Mammary epithelial cell (primary cell): ENCODE measurements at regions of chr18 and their contacts with region 1.

Region 1: DNA sequence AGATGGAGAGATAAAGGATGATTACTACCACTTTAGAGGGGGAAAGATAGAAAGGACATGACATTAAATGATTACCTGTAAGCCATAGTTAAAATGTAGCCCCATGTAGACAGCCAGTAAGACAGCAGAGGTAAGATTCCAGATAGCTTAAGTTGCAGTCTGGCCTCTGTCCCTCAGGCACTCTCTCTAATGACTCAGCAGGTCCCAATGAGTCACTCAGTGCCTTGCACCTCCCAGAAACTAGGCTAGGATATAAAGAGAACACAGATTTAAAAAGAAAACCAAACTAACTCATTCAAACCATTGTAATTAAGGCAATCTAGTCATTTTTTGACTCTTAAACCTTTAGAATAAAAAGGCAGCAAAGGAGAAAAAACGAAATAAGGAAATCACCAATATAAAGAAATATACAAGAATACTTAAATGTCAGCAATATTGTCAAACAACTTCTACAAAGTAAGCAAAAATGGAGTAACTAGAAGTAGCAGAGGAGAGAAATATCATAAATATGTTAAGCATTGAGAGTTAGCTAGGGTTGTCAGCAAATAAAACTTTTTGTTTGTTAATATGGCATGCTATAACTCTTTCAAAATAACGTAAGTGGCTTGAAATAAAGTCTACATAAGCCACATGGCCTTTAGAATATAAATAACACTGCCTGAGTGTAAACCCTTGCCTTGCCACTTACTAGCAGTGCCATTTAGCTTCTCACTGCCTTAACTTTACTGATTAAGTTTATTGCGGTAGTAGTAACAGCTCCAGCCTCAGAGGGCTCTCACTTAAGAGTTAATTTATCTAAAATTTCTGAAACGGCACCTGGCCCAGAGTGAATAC is 48.5 kb downstream of the SOCS6 start:
- DNase-seq: peak; percentile 96
- H3K4me3 ChIP-seq: no peak overlapping the region
- H3K27ac ChIP-seq: peak overlapping the region; percentile 99
- H3K4me1 ChIP-seq: peaks cover 37% of the 10 kb centered on the region
- H3K27me3 ChIP-seq: no peaks in the 10 kb centered on the region
- CTCF ChIP-seq: no peak

Region 2: GRCh38 chr18:70044632-70045031 is 292.7 kb before region 1 on chr18:
- CTCF ChIA-PET with region 1: no interaction called
- dilution Hi-C with region 1: no loop called
- in situ Hi-C with region 1: no loop called
- intact Hi-C with region 1: loop called (anchors 5 kb)
- DNase-seq: peak; percentile 98
- H3K4me3 ChIP-seq: peak overlapping the region; percentile 6 to 100 (median 83)
- H3K27ac ChIP-seq: peak overlapping the region; percentile 97
- H3K4me1 ChIP-seq: peaks cover 24% of the 10 kb centered on the region
- H3K27me3 ChIP-seq: no peaks in the 10 kb centered on the region
- CTCF ChIP-seq: no peak

Region 3: GRCh38 chr18:70205421-70206397 is 131.6 kb before region 1 on chr18 and contains the start of gene RTTN:
- CTCF ChIA-PET with region 1: no interaction called
- dilution Hi-C with region 1: no loop called
- in situ Hi-C with region 1: no loop called
- intact Hi-C with region 1: loop called (anchors 1 kb)
- DNase-seq: peak; percentile 93
- H3K4me3 ChIP-seq: peak within 1 kb of the TSS; percentile 84 to 94 (median 87)
- H3K27ac ChIP-seq: peak within 1 kb of the TSS; percentile 92
- H3K4me1 ChIP-seq: peaks cover 12% of the 10 kb centered on the region
- H3K27me3 ChIP-seq: no peaks in the 10 kb centered on the region
- CTCF ChIP-seq: no peak
- total RNA-seq, gene RTTN: 31.5 to 59.4 TPM

Region 4: DNA sequence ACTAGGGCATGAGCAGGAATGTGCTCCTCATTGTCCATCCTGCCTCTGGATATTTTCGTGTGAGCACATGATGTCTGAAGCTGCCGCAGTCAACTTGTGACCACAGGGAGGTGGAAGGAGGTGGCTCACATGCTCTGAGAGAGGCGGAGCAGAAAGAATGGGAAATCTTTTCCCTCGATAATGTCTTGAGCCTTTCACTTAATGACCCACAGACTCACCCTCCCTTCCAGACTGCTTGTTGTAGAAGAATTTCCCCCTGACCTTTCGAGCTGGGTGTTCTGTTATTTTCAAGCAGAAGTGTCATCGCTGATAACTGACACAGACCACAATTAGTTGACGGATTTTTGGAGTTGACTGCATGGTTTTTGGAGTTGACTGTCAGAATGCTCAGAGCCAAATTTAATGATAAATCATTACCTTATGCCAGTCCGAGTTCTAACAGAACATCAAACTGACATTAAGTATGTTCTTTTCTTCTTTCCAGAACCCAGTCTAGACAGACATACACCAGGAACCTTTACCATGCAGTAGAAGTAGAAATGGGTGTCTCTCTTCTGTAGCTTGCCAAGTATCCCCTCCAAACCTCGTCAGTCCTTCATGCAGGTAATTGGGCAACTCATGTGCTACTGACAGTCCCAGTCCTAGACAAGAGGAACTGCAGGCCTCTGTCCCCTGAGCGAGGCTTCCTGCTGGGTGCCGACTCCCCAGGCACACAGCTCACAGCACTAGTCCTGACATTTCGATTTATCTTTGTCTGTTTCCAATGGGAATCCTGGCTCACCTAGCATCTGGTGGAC is 102.5 kb before region 1 on chr18:
- CTCF ChIA-PET with region 1: no interaction called
- dilution Hi-C with region 1: no loop called
- in situ Hi-C with region 1: no loop called
- intact Hi-C with region 1: no loop called
- DNase-seq: no peak
- H3K4me3 ChIP-seq: no peak overlapping the region
- H3K27ac ChIP-seq: no peak overlapping the region
- H3K4me1 ChIP-seq: no peaks in the 10 kb centered on the region
- H3K27me3 ChIP-seq: no peaks in the 10 kb centered on the region
- CTCF ChIP-seq: no peak

Region 5: DNA sequence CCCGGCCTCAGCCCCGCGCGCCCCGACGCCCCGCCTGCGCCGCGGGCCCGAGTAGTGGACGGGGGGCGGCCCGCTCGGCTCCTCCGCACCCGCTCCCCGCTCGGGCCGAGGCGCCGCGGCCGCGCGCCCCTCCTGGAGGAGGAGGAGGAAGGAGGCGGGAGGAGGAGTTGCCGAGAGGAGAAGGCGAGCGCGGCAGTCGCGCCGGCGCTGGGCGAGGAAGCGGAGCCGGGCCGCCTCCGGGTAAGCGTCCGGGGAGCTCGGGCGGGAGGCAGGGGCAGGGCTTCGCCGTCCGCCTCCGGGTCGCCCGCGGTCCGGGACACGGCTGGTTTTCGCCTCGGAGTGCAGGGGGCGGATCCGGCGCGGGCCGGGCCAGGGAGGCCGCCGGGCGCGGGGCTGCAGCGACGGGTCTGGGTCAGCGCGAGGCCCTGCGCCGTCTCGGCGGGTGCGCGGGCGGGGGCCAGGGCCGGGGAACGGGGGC is 48.5 kb before region 1 on chr18 and contains the start of gene SOCS6:
- CTCF ChIA-PET with region 1: no interaction called
- dilution Hi-C with region 1: no loop called
- in situ Hi-C with region 1: no loop called
- intact Hi-C with region 1: loop called (anchors 1 kb)
- DNase-seq: peak; percentile 70
- H3K4me3 ChIP-seq: peak within 1 kb of the TSS; percentile 80 to 99 (median 91)
- H3K27ac ChIP-seq: peak within 1 kb of the TSS; percentile 82
- H3K4me1 ChIP-seq: peaks cover 21% of the 10 kb centered on the region
- H3K27me3 ChIP-seq: no peaks in the 10 kb centered on the region
- CTCF ChIP-seq: no peak
- total RNA-seq, gene SOCS6: 22.7 to 31.5 TPM

Region 6: GRCh38 chr18:70301667-70302066 is 35.7 kb before region 1 on chr18:
- CTCF ChIA-PET with region 1: no interaction called
- dilution Hi-C with region 1: no loop called
- in situ Hi-C with region 1: no loop called
- intact Hi-C with region 1: no loop called
- DNase-seq: no peak
- H3K4me3 ChIP-seq: no peak overlapping the region
- H3K27ac ChIP-seq: no peak overlapping the region
- H3K4me1 ChIP-seq: no peaks in the 10 kb centered on the region
- H3K27me3 ChIP-seq: no peaks in the 10 kb centered on the region
- CTCF ChIP-seq: no peak

Region 7: DNA sequence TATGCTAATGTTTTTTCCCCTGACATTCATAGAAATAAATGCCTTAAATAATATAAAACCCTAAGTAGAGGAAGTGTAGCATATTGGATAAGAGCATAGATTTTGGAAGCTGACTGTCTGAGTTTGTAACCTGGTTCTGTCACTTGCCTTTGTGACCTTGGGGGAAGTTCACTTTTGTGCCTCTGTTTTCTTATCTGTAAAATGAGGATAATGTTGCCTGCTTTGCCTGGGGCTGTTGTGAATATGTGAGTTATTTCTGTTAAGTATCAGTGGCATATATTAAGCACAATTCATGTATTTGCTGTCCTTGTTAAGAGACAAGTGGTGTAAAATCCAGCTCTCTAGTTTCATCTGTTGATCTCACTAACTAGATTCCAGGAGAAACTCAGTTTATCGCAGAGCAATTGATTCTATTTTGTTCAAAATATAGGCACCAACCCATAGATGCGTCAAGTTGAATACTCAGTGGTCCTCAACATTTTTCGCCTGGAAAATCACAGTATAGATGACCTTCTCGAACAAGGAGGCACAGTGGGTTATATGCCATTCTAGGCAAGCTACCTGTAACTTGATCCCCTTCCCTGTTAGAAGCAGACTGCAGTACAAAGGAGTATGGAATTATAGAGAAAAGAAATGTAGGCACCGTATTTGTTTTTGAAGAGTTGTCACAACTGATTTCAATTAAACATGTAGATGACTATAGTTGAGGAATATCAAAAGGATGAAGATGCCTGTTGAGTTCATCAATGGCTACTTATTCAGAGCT is 18.4 kb after region 1 on chr18:
- CTCF ChIA-PET with region 1: no interaction called
- dilution Hi-C with region 1: no loop called
- in situ Hi-C with region 1: no loop called
- intact Hi-C with region 1: loop called (anchors 1 kb)
- DNase-seq: no peak
- H3K4me3 ChIP-seq: no peak overlapping the region
- H3K27ac ChIP-seq: no peak overlapping the region
- H3K4me1 ChIP-seq: peaks cover 20% of the 10 kb centered on the region
- H3K27me3 ChIP-seq: no peaks in the 10 kb centered on the region
- CTCF ChIP-seq: no peak

Region 8: DNA sequence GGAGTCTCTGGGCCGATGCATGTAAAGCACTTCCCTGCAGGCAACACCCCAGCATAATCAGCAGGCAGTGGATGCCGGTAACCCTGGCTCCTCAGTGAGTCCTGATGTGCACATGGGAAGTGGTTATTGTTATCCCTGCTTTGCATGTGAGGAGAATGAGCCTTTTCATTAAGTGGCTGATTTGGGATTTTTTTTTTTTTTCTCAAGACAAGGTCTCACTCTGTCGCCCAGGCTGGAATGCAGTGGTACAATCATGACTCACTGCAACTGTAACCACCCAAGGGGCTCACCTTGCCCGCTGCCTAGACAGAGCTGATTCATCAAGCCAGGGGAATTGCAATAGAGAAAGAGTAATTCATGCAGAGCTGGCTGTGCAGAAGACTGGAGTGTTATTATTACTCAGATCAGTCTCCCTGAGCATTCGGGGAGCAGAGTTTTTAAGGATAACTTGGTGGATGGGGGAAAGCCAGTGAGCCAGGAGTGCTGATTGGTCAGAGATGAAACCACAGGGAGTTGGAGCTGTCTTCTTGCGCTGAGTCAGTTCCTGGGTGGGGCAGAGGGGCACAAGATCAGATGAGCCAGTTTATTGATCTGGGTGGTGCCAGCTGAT is 46.9 kb after region 1 on chr18:
- CTCF ChIA-PET with region 1: no interaction called
- dilution Hi-C with region 1: no loop called
- in situ Hi-C with region 1: no loop called
- intact Hi-C with region 1: loop called (anchors 1 kb)
- DNase-seq: peak; percentile 99
- H3K4me3 ChIP-seq: no peak overlapping the region
- H3K27ac ChIP-seq: peak overlapping the region; percentile 85
- H3K4me1 ChIP-seq: peaks cover 27% of the 10 kb centered on the region
- H3K27me3 ChIP-seq: no peaks in the 10 kb centered on the region
- CTCF ChIP-seq: no peak

Region 9: GRCh38 chr18:70421471-70422390 is 84.4 kb after region 1 on chr18:
- CTCF ChIA-PET with region 1: no interaction called
- dilution Hi-C with region 1: no loop called
- in situ Hi-C with region 1: no loop called
- intact Hi-C with region 1: loop called (anchors 1 kb)
- DNase-seq: peak; percentile 96
- H3K4me3 ChIP-seq: no peak overlapping the region
- H3K27ac ChIP-seq: peak overlapping the region; percentile 95
- H3K4me1 ChIP-seq: peaks cover 45% of the 10 kb centered on the region
- H3K27me3 ChIP-seq: no peaks in the 10 kb centered on the region
- CTCF ChIP-seq: no peak

Region 10: GRCh38 chr18:70578480-70578879 is 241.1 kb after region 1 on chr18:
- CTCF ChIA-PET with region 1: no interaction called
- dilution Hi-C with region 1: no loop called
- in situ Hi-C with region 1: no loop called
- intact Hi-C with region 1: no loop called
- DNase-seq: no peak
- H3K4me3 ChIP-seq: no peak overlapping the region
- H3K27ac ChIP-seq: no peak overlapping the region
- H3K4me1 ChIP-seq: no peaks in the 10 kb centered on the region
- H3K27me3 ChIP-seq: no peaks in the 10 kb centered on the region
- CTCF ChIP-seq: peak in 1 of 2 donors; percentile 21